ENCODE measurements at regions of chr4 and their contacts with region 1.

Region 1: GRCh38 chr4:186326391-186326790 is 60.4 kb downstream of the F11 start:
- DNase-seq: no peak
- H3K4me3 Mint-ChIP-seq: no peak overlapping the region
- H3K27ac Mint-ChIP-seq: no peak overlapping the region
- H3K4me1 Mint-ChIP-seq: no peaks in the 10 kb centered on the region
- H3K27me3 Mint-ChIP-seq: no peaks in the 10 kb centered on the region

Region 2: DNA sequence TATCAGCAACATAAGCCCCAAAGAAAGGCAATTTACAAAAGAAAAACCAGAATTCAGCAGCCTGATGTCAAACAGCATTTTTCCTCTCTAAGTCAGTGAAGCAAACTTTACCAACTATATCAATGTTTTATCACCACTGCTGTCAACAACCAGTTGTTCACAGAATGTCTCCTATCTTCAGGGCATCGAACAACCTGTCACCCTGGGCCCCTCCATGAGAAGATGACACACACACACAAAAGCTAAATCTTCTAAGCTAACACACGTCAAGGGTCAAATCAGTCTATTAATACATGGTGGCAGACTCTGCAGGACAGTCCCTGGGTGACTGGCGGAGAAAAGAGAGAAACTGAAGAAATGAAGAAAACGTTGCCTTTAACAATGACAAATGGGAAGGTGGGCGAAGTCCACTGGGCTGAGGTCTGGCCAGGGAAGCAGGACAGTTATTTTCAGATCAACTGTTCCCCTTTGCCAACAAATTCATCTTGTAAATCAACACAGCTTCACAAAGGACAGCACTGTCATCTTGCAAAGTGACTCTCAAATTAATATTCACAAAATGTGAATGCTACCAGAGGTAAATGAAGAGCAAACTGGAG is 384.2 kb after region 1 on chr4:
- CTCF ChIA-PET with region 1: no interaction called
- POLR2A ChIA-PET with region 1: interaction called, 14 read pairs
- DNase-seq: no peak
- H3K4me3 Mint-ChIP-seq: no peak overlapping the region
- H3K27ac Mint-ChIP-seq: no peak overlapping the region
- H3K4me1 Mint-ChIP-seq: no peaks in the 10 kb centered on the region
- H3K27me3 Mint-ChIP-seq: no peaks in the 10 kb centered on the region

Measured in activated CD4-positive, alpha-beta T cell treated with anti-CD3 and anti-CD28 coated beads, Interleukin-2, amount 10 ng/mL, durations not matched to agents 7 days and 5 days (primary cell).